ENCODE measurements at regions of chr17 and their contacts with region 1.

Region 1: DNA sequence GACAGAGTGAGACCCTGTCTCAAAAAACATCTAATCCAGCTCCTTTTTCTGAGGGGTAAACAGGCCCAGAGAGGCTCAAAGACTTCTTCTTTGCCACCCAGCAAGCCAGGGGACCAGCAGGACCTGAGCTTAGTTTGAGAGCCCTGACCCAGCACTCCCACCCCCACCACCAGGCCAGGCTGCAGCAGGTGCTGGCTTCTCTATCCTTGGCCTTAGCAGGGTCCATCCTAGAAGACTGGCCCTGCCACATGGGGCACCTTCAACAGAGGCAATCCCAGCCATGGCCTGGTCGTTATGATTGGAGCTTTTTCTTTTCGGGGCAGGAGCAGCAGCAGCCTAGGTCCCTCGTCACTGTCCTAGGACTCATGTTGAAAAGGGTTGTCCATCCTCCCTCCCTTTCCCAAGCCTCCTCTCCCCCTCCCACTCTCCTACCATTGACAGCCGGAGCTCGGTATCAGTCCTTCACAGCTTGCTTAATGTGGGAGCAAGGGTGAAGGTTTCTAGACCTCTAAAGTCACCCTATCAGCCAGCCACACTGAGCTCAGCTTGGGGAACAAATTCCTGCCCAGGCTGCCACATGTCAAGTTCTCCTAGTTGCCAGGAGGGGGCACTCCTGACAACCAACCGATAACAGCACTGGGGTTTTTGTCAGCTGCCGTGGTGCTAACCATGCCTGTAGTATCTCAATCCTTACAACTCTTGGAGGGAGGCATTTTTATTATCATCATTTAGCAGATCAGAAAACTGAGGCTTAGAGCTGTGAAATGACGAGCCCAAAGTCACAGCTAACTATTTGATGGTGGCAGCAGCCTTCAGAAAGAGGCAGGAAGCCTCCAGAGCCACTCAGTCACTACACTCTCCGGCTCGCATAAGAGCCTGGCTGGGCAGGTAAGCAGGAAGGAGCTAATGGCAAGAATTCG is 11.2 kb downstream of the MRPL27 start:
- DNase-seq: peak; percentile 73
- ATAC-seq: peak; percentile 87
- H3K4me3 Mint-ChIP-seq: no peak overlapping the region
- H3K27ac Mint-ChIP-seq: peak overlapping the region; percentile 79
- H3K4me1 Mint-ChIP-seq: peaks cover 16% of the 10 kb centered on the region
- H3K27me3 Mint-ChIP-seq: no peaks in the 10 kb centered on the region
- CTCF ChIP-seq: peak; percentile 85

Region 2: DNA sequence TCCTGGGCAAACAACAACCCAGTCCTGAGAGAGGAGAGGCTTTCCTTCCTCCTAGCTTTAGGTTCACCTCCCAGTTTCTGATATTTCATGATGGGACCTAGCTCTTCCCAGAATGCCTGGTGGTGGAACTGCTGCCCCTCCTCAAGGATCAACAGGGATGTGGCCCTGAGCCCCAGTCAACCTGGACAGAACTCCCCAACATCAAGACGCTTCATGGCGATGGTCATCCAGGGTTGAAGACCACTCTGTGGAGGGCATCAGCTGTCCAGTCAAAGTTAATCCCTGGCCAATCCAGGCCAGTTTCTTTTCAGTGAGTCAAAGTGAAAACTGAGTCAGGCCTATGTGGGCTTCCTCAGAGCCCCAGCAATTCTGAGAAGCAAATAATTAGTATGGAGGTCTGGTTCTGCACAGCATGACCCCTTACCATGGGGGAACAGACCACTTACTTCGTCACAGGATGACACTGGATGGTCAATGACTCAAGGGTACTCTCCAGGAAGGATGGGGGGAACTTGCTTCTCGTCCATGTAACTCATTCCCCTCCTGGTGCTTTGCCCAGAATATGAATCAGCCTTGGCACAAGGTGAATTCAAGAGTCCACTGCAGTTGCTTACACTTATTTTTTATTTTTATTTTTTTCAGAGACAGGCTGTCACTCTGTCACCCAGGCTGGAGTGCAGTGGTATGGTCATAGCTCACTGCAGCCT is 30.6 kb before region 1 on chr17:
- CTCF ChIA-PET with region 1: interaction called, 11 read pairs
- POLR2A ChIA-PET with region 1: no interaction called
- intact Hi-C with region 1: no loop called
- DNase-seq: no peak
- ATAC-seq: peak; percentile 77
- H3K4me3 Mint-ChIP-seq: no peak overlapping the region
- H3K27ac Mint-ChIP-seq: no peak overlapping the region
- H3K4me1 Mint-ChIP-seq: peaks cover 11% of the 10 kb centered on the region
- H3K27me3 Mint-ChIP-seq: peaks cover 2% of the 10 kb centered on the region
- CTCF ChIP-seq: no peak

Region 3: GRCh38 chr17:50372758-50373556 is 11.1 kb after region 1 on chr17 and contains the starts of genes EME1 and MRPL27:
- CTCF ChIA-PET with region 1: interaction called, 46 read pairs
- POLR2A ChIA-PET with region 1: interaction called, 50 read pairs
- intact Hi-C with region 1: no loop called
- DNase-seq: peak; percentile 91
- ATAC-seq: peak; percentile 95
- H3K4me3 Mint-ChIP-seq: peak within 1 kb of the TSS; percentile 94
- H3K27ac Mint-ChIP-seq: peak within 1 kb of the TSS; percentile 98
- H3K4me1 Mint-ChIP-seq: peaks cover 21% of the 10 kb centered on the region
- H3K27me3 Mint-ChIP-seq: no peaks in the 10 kb centered on the region
- CTCF ChIP-seq: no peak
- total RNA-seq, gene EME1: 48.0 to 48.6 TPM
- total RNA-seq, gene MRPL27: 54.6 to 55.8 TPM

Region 4: GRCh38 chr17:50425682-50426471 is 64.1 kb after region 1 on chr17 and contains the start of gene ACSF2:
- CTCF ChIA-PET with region 1: interaction called, 10 read pairs
- POLR2A ChIA-PET with region 1: no interaction called
- intact Hi-C with region 1: no loop called
- DNase-seq: peak; percentile 79
- ATAC-seq: peak; percentile 85
- H3K4me3 Mint-ChIP-seq: peak within 1 kb of the TSS; percentile 80
- H3K27ac Mint-ChIP-seq: peak within 1 kb of the TSS; percentile 77
- H3K4me1 Mint-ChIP-seq: peaks cover 34% of the 10 kb centered on the region
- H3K27me3 Mint-ChIP-seq: no peaks in the 10 kb centered on the region
- CTCF ChIP-seq: no peak
- total RNA-seq, gene ACSF2: 14.5 to 17.5 TPM

Region 5: DNA sequence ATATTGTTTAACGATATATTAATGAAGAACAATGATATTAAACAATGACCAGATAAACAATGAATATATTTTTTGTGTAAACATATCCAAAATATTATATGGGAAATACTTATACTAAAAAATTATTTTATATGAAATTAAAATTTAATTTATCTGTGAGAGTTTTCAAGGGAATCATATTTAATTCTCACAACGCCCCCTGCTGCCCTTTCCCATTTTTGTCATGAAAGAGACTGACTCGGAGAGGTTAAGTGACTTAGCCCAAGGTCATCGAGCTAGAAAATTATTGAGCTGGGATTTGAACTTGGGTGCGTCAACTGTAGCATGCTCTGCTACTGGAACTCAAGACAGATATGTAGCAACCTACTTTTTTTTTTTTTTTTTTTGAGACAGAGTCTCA is 139.2 kb after region 1 on chr17:
- CTCF ChIA-PET with region 1: interaction called, 16 read pairs
- POLR2A ChIA-PET with region 1: no interaction called
- intact Hi-C with region 1: no loop called
- DNase-seq: peak; percentile 65
- ATAC-seq: no peak
- H3K4me3 Mint-ChIP-seq: no peak overlapping the region
- H3K27ac Mint-ChIP-seq: no peak overlapping the region
- H3K4me1 Mint-ChIP-seq: peaks cover 22% of the 10 kb centered on the region
- H3K27me3 Mint-ChIP-seq: no peaks in the 10 kb centered on the region
- CTCF ChIP-seq: peak; percentile 48

Measured in activated CD8-positive, alpha-beta T cell treated with anti-CD3 and anti-CD28 coated beads for 36 hours (primary cell).